Keratinocyte (primary cell): ENCODE measurements at regions of chr20 and their contacts with region 1.

Region 1: DNA sequence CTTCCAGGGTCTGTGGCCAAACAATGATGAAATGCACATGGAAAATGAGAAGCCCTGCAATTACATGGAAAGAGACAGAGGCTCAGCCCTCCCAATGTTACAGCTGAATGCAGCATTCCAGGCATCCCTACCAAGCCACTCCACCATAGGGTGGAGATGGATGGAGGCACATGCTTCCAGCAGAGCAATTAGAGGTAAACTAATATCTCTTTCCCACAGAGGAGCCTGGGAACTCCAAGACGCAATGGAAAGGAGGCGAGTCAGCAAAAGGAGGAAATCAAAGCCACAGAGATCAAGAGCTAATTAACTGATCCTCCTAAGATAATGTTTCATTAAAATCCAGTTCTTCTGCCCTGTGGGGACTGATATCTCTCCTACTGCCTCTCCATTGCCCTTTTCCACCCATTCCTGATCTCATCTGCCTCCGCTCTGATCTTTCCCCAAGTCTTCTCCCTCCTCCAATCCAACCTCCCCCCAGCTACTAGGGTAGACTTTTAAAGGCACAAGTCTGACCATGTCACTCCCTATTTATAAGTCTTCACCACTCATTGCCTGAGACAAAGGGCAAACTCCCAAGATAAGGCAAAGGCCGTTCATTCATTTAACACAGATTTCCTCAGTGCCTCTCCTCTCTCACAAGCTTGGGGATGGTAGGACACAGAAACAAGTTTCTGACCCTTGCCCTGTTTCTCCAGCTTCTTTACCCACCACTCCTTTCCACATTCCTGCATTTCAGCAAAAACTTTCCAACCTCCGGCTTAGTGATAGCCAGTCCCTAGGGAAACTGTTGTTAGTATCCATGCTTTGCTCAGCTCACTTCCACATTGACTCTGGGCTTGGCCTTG is 14.3 kb upstream of the KCNB1 start:
- DNase-seq: no peak
- H3K4me3 ChIP-seq: no peak overlapping the region
- H3K27ac ChIP-seq: no peak overlapping the region
- H3K4me1 ChIP-seq: no peaks in the 10 kb centered on the region
- H3K27me3 ChIP-seq: peaks cover 20% of the 10 kb centered on the region
- CTCF ChIP-seq: no peak

Region 2: DNA sequence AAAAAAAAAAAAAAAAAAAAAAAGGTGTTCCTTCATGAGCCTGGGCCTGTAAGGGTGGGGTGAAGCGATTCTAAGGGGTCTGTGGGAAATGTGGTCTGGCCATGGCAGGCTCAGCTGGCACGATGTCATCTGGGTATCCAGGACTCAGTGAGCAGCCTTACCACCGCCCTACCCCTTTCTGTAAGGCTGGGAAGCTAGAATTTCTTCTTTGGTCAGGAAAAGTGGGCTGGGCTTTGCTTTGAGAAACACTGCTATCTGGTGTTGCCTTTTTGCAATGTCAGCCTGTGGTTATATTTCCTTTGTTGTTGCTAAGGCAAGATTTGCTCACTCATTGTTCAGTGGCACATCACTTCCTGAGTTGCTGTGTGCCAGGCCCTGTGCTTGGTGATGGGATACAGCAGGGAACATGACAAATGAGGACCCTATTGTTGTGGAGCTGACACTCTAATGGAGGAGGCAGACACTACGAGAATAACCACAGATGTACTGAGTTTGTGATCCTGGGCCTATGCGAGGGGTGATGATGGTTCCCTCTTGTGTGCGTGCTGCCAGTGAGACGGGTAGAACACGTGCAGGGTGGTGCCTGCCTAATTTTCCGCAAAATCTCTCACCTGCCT is 173.0 kb before region 1 on chr20:
- dilution Hi-C with region 1: loop called (anchors 10 kb)
- DNase-seq: no peak
- H3K4me3 ChIP-seq: no peak overlapping the region
- H3K27ac ChIP-seq: no peak overlapping the region
- H3K4me1 ChIP-seq: peaks cover 3% of the 10 kb centered on the region
- H3K27me3 ChIP-seq: peaks cover 40% of the 10 kb centered on the region
- CTCF ChIP-seq: peak; percentile 23 to 59 (median 56)

Region 3: DNA sequence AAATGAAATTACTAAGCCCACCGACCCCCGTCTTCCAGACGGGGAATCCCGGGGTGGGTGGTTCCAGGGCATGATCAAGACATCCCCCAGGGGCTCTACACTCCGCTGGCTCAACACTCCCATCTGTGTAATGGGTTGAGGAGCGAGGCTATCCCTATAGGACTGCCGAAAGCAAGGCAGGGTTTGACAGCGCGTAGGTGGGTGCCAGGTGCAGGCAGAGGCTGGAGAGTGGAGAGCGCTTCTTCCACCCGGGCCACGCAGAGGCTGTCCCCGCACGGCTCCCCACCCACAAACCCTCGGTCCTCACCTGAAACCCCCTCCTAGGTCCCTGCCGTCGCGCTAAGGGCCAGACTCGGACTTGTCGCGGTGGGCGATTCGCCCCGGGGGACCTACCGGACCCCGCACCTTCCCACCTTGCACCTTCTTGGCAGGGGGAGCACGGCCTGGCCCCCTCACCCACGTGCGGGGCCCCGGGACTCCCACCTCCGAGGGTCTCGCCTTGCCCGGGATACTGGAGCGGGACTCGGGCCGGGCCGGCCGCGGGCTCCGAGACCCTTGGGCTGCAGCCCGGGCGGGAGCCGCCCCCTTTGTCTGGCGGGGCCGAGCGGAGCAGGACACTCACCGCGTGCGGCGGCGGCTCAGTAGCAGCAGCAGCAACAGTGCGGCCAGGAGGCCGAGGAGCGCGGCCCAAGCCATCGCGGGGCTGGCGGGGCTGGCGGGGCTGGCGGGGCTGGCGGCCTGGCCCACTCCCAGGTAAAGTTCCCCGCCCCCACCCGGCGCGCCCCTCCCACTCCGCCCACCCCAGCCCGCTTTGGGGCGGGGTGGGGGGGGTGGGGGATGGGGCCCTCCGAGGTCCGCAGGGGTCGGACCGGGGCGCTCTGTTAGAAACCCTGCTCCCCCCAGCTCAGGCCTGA is 70.9 kb after region 1 on chr20 and contains the start of gene PTGIS:
- dilution Hi-C with region 1: no loop called
- DNase-seq: no peak
- H3K4me3 ChIP-seq: no peak within 1 kb of the TSS
- H3K27ac ChIP-seq: no peak within 1 kb of the TSS
- H3K4me1 ChIP-seq: no peaks in the 10 kb centered on the region
- H3K27me3 ChIP-seq: peaks cover 56% of the 10 kb centered on the region
- CTCF ChIP-seq: no peak
- polyA plus RNA-seq, gene PTGIS: not detected in 3 replicates